Transverse colon (tissue), 4 donors: ENCODE measurements at regions of chr7 and their contacts with region 1.

Region 1: GRCh38 chr7:96426027-96426426 is 104.1 kb upstream of the SLC25A13 start:
- DNase-seq: no peak
- H3K4me3 ChIP-seq: no peak overlapping the region
- H3K27ac ChIP-seq: no peak overlapping the region
- H3K4me1 ChIP-seq: no peaks in the 10 kb centered on the region
- H3K27me3 ChIP-seq: no peaks in the 10 kb centered on the region
- CTCF ChIP-seq: no peak
- EP300 ChIP-seq: no peak
- POLR2A ChIP-seq: no peak

Region 2: DNA sequence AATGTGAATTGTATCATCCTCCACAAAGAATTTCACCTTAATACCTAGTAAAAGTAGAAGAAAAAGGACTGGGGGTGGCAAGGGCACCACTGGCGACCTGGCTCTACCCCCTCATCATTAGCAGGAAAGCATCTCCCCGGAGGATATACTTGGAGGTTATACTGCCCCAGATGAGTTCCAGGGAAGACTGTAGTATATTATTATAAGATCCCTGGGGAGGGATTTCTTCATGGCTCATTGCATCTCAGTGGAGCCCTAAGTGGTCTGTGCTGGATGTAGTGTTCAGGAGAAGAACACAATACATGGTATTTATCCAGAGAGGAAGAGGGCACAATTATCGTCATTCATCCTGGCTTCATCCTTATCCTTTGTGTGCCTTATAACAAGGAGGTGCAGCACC is 667.8 kb before region 1 on chr7:
- in situ Hi-C with region 1: no loop called
- intact Hi-C with region 1: no loop called
- DNase-seq: no peak
- H3K4me3 ChIP-seq: no peak overlapping the region
- H3K27ac ChIP-seq: no peak overlapping the region
- H3K4me1 ChIP-seq: no peaks in the 10 kb centered on the region
- H3K27me3 ChIP-seq: no peaks in the 10 kb centered on the region
- CTCF ChIP-seq: no peak
- EP300 ChIP-seq: no peak
- POLR2A ChIP-seq: no peak

Region 3: GRCh38 chr7:96327429-96327828 is 98.6 kb before region 1 on chr7:
- in situ Hi-C with region 1: loop called in 1 of 4 experiments (anchors 25 kb)
- intact Hi-C with region 1: no loop called
- DNase-seq: peak; percentile 87
- H3K4me3 ChIP-seq: no peak overlapping the region
- H3K27ac ChIP-seq: peak overlapping the region; percentile 57 to 66 (median 62)
- H3K4me1 ChIP-seq: peaks cover 5 to 23% (median 8%) of the 10 kb centered on the region in 4 donors
- H3K27me3 ChIP-seq: no peaks in the 10 kb centered on the region
- CTCF ChIP-seq: no peak
- EP300 ChIP-seq: no peak
- POLR2A ChIP-seq: no peak